Activated T-helper 1 cell treated with anti-CD3 and anti-CD28 coated beads, Interleukin-12 subunit alpha, Interleukin-12 subunit beta, Interleukin-2, Interleukin-4 antibody, amounts not matched to agents 30 ng/mL and 10 ng/mL and 1 ng/mL, durations not matched to agents 14 hours and 24 hours and 36 hours (primary cell): ENCODE measurements at regions of chr15 and their contacts with region 1.

Region 1: DNA sequence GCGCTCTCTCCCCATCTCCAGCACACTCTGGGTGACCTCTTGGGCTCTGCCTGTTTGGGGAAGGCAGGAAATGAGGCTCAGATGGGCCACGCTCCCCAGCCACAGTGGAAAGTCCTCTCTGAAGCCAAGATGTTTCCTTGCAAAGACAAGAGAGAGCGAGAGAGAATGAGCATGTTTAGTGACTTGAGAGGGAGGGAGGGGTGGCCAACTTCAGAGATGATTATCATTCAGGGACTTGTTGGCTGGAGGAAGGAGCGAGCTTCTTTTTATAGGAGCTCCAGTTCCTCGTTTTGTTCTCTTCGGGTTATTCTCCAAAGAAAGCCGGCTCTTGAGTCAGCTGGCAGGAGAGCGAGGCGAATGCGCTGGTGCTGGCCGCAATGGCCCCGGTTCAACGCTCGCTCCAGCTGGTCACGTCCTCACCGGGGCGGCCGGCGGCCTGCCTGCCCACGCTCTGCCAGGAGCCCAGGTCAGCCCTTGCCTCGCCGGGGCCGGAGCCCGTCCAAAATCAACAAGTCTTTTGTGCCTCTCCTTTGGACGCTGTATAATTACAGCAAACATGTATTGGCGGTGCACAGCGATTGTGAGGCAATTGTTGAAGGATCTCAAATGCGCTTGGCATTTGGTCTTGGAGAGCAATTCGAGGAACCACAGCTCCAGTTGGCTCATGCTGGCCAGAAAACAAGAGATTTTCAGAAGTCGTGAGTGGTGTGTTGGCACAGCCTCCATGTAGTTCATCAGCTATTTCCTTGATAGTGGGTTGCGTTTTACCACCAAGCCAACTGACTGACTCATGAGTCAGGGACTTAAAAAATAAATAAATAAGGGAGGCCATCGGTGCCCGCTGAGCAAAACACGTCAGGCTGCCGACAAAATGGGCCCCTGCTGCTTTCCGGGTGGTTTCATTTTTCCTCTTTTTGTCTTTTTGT is 288.6 kb downstream of the UACA start:
- DNase-seq: no peak
- H3K4me3 Mint-ChIP-seq: peak overlapping the region; percentile 58
- H3K27ac Mint-ChIP-seq: peak overlapping the region; percentile 40
- H3K4me1 Mint-ChIP-seq: peaks cover 56% of the 10 kb centered on the region
- H3K27me3 Mint-ChIP-seq: peaks cover 65% of the 10 kb centered on the region

Region 2: GRCh38 chr15:70447928-70448698 is 26.6 kb before region 1 on chr15:
- intact Hi-C with region 1: loop called (anchors 2 kb)
- DNase-seq: no peak
- H3K4me3 Mint-ChIP-seq: no peak overlapping the region
- H3K27ac Mint-ChIP-seq: no peak overlapping the region
- H3K4me1 Mint-ChIP-seq: peaks cover 39% of the 10 kb centered on the region
- H3K27me3 Mint-ChIP-seq: peaks cover 58% of the 10 kb centered on the region